ENCODE measurements at regions of chr15 and their contacts with region 1.

Region 1: DNA sequence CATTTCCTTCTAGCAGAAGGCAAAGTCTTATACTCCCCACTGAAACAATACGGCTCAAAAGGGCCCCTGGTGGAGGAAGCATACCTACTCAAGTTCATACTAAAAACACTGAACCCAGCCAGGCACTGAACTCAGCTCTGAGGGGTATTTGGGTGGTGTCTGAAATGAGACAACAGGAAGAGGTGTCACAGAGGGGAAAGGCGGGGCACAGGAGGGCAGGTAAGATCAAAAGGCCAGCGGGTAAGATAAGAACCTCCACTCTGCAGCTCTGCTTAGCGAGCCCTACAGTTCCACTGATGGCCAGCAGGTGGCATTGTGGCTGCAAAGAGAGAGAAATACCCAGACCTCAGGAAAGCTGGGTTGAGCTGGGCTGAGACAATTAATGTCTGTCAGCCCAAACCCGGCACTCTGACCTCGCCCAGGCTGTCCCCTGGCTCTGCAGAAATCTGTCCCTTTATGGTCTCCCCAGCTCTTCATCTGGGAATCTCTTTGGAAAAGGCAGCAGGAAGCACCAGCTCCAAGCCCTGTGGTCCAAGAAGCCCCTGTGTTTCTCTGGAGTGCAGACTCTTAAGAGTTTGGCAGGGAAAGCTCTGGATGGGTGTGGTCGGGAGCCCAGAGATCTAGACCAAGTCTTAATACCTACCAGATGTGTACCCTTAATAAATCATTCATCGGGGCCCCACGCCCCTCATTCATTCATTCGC is 8.4 kb downstream of the MFGE8 start:
- DNase-seq: peak; percentile 75 to 90 (median 81)
- ATAC-seq: peak; percentile 48 to 73 (median 69)
- H3K4me3 ChIP-seq: no peak overlapping the region
- H3K27ac ChIP-seq: peak overlapping the region in 10 of 12 donors; percentile 22 to 68 (median 44)
- H3K4me1 ChIP-seq: peaks cover 3 to 77% (median 60%) of the 10 kb centered on the region in 12 donors
- H3K27me3 ChIP-seq: no peaks in the 10 kb centered on the region
- CTCF ChIP-seq: peak; percentile 97 to 100 (median 99)
- POLR2A ChIP-seq: peak in 1 of 2 donors; percentile 23

Region 2: DNA sequence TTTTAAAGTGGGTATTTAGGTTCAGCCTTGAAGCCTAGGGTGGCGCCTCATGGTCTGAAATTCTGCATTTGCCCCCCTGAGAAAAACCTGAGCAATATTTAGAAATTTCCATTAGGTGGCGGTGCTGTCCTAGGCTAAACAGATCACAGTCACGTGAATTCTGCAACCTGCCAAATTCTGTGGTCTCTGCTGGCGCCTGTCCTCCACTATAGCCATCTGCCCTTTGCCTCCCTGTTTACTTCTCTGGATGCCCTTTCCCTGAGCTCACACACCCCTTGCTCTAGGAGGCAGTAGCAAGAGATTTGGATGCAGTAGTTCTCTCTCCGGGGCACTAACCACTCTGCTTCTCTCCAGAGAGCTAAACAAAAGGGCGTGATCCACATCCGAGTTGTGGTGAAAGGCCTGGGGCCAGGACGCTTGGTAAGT is 428.1 kb before region 1 on chr15:
- intact Hi-C with region 1: no loop called
- DNase-seq: peak in 4 of 5 donors; percentile 34 to 56 (median 50)
- ATAC-seq: peak; percentile 48 to 93 (median 86)
- H3K4me3 ChIP-seq: no peak overlapping the region
- H3K27ac ChIP-seq: peak overlapping the region in 5 of 12 donors; percentile 2 to 65 (median 19)
- H3K4me1 ChIP-seq: peaks cover 0 to 9% (median 0%) of the 10 kb centered on the region in 12 donors
- H3K27me3 ChIP-seq: no peaks in the 10 kb centered on the region
- CTCF ChIP-seq: peak; percentile 33 to 64 (median 52)
- POLR2A ChIP-seq: no peak

Region 3: DNA sequence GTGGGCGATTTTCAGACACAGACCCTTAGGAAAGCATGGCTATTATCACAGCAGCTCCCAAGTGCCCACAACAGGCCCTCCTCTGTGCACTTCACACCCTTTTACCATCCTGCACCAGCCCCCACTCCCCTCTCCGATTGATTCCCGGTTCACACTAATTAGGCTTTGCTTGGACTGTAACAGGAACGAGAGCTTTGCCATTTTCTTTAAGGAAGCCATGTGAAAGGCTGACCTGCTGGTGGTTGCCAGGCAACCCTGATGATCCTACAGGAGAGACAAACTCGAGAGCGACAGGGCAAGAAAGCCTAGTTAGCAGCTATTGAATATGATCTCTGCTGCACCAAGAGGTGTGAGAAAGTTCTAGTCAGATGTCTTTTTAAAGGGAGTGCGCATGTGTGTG is 330.1 kb before region 1 on chr15:
- intact Hi-C with region 1: no loop called
- DNase-seq: no peak
- ATAC-seq: no peak
- H3K4me3 ChIP-seq: no peak overlapping the region
- H3K27ac ChIP-seq: peak overlapping the region in 4 of 12 donors; percentile 5 to 64 (median 14)
- H3K4me1 ChIP-seq: peaks cover 0 to 24% (median 7%) of the 10 kb centered on the region in 12 donors
- H3K27me3 ChIP-seq: no peaks in the 10 kb centered on the region
- CTCF ChIP-seq: no peak
- POLR2A ChIP-seq: no peak

Region 4: GRCh38 chr15:88690331-88690730 is 214.4 kb before region 1 on chr15:
- intact Hi-C with region 1: no loop called
- DNase-seq: no peak
- ATAC-seq: no peak
- H3K4me3 ChIP-seq: no peak overlapping the region
- H3K27ac ChIP-seq: no peak overlapping the region
- H3K4me1 ChIP-seq: peaks cover 0 to 3% (median 0%) of the 10 kb centered on the region in 12 donors
- H3K27me3 ChIP-seq: peaks cover 0 to 14% (median 0%) of the 10 kb centered on the region in 9 donors
- CTCF ChIP-seq: no peak
- POLR2A ChIP-seq: no peak

Region 5: GRCh38 chr15:88814393-88814792 is 90.4 kb before region 1 on chr15:
- intact Hi-C with region 1: no loop called
- DNase-seq: no peak
- ATAC-seq: no peak
- H3K4me3 ChIP-seq: no peak overlapping the region
- H3K27ac ChIP-seq: no peak overlapping the region
- H3K4me1 ChIP-seq: no peaks in the 10 kb centered on the region
- H3K27me3 ChIP-seq: peaks cover 0 to 25% (median 3%) of the 10 kb centered on the region in 9 donors
- CTCF ChIP-seq: no peak
- POLR2A ChIP-seq: no peak

Region 6: DNA sequence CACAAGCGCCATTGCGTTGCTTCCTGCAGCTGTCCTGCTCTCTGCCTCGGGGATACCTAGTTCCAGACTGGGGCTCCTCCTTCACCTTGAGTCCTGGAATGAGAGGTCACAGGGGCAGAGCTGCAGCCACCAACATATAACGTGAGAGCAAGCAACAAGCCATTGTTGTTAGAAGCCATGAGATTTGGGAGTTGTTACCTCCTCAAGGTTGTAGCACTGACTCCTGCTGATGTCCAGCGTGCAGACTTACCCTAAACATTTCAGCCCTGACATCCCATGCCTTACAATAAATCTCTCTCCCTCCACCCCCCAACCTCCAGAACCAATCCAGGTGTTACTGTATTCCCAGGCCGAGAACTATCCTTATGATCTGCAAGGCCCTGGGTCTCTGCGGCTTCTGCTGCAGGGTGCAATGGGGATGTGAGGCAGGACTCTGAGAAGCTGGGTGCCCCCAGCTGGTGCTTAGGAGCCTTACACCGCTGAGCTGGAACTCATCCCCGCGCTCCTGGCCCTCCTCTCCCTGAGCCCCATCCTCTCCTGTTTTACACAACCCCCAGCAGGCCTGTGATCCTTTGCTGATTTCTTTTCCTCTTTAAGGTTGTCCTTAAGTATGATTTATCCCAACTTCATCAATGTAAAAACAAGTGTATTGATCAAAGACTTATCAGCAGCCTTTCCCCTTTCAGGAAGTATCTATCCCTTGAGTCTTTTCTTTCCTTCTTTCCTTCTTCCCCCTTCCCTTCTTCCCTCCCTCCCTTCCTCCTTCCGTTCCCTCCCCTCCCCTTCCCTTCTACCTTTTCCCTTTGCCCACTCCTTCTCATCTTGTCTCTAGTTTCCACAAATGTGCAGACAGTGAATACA is 99.3 kb after region 1 on chr15:
- intact Hi-C with region 1: loop called (anchors 1 to 5 kb)
- DNase-seq: peak in 4 of 5 donors; percentile 58 to 79 (median 61)
- ATAC-seq: peak; percentile 68 to 91 (median 86)
- H3K4me3 ChIP-seq: no peak overlapping the region
- H3K27ac ChIP-seq: no peak overlapping the region
- H3K4me1 ChIP-seq: peaks cover 0 to 29% (median 12%) of the 10 kb centered on the region in 12 donors
- H3K27me3 ChIP-seq: no peaks in the 10 kb centered on the region
- CTCF ChIP-seq: peak; percentile 27 to 70 (median 59)
- POLR2A ChIP-seq: no peak

Region 7: DNA sequence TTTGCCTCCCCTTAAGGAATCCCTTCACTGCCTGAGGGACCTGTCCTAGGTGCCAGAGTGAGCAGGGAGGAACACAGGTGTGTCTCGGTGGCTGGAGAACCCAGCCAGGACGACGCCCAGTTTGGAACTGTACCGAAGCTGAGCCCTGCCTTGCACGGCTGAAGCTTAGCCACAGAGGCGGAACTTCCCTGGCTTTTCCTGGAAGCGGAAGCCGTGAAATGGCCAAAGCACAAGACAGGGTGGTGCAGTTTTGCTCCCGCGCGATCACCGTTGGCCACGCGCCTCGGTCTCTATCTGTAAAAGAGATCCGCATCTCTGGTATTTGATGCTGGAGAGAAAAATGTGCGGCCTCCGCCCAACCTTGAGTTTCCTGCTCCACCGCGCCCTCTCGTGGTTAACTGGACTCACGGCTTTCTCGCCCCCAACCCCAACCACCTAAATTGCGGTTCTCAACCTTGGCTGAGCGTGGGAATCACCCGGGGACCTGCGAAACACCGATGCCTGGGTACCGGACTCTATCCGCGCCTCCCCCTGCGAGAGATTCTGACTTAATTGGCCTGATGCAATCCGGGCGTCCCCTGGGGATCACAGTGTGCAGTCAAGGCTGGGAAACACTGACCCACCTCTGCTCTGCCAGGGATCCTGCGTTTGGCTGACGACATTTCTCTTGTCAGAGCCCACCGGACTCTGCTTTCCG is 112.7 kb after region 1 on chr15:
- intact Hi-C with region 1: loop called in 9 of 10 experiments (anchors 1 to 5 kb)
- DNase-seq: peak; percentile 79 to 87 (median 80)
- ATAC-seq: peak; percentile 57 to 73 (median 71)
- H3K4me3 ChIP-seq: peak overlapping the region in 9 of 12 donors; percentile 37 to 49 (median 42)
- H3K27ac ChIP-seq: peak overlapping the region in 11 of 12 donors; percentile 59 to 89 (median 77)
- H3K4me1 ChIP-seq: peaks cover 5 to 50% (median 29%) of the 10 kb centered on the region in 12 donors
- H3K27me3 ChIP-seq: no peaks in the 10 kb centered on the region
- CTCF ChIP-seq: peak; percentile 72 to 91 (median 80)
- POLR2A ChIP-seq: no peak